A673 (cell line): ENCODE measurements at regions of chr2 and their contacts with region 1.

Region 1: GRCh38 chr2:28444956-28445355 is 50.9 kb upstream of the PLB1 start:
- DNase-seq: no peak
- H3K4me3 ChIP-seq: no peak overlapping the region
- H3K27ac ChIP-seq: no peak overlapping the region
- H3K4me1 ChIP-seq: no peaks in the 10 kb centered on the region
- H3K27me3 ChIP-seq: no peaks in the 10 kb centered on the region
- CTCF ChIP-seq: no peak

Region 2: GRCh38 chr2:27509326-27509725 is 935.6 kb before region 1 on chr2:
- CTCF ChIA-PET with region 1: no interaction called
- POLR2A ChIA-PET with region 1: no interaction called
- intact Hi-C with region 1: no loop called
- DNase-seq: peak; percentile 45
- H3K4me3 ChIP-seq: no peak overlapping the region
- H3K27ac ChIP-seq: no peak overlapping the region
- H3K4me1 ChIP-seq: no peaks in the 10 kb centered on the region
- H3K27me3 ChIP-seq: no peaks in the 10 kb centered on the region
- CTCF ChIP-seq: no peak

Region 3: DNA sequence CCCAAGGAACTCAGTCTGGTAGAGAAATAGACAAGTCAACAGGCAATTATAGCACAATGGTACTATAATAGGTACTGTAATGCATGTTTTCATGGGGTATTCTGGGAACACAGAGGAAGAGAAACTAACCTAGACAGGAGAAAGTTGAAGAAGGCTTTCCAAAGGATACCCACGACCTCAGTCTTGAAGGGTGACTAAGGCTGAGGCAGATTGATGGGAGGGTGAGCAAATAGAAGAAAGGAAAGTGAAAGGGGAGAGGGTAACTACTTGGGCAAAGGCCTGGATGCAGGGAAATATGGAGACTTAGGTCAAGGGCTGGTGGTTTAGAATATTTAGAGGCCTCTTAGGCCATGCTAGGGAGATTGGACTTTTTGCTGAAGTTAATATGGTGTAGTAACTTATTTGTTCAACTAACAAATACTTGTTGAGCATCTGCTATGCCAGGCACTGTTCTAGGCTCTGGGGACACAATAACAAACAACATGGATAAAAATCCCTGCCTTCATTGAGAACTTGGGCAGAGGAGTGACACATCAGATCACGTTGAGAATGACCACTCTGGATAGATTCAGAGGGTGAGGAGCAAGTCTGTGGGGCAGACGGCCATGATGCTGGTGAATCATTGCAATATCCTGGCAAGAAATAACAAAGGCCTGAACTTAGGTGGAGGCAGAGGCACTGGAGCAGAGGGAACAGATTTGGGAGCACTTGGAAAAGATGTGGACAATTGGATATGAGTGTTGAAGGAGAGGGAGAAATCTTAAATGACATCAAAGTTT is 107.3 kb after region 1 on chr2:
- CTCF ChIA-PET with region 1: no interaction called
- POLR2A ChIA-PET with region 1: interaction called, 12 read pairs
- intact Hi-C with region 1: no loop called
- DNase-seq: no peak
- H3K4me3 ChIP-seq: no peak overlapping the region
- H3K27ac ChIP-seq: no peak overlapping the region
- H3K4me1 ChIP-seq: no peaks in the 10 kb centered on the region
- H3K27me3 ChIP-seq: no peaks in the 10 kb centered on the region
- CTCF ChIP-seq: no peak